ENCODE measurements at regions of chr4 and their contacts with region 1.

Region 1: GRCh38 chr4:38663801-38664705 is at the start of gene KLF3:
- DNase-seq: peak; percentile 86
- H3K4me3 Mint-ChIP-seq: peak within 1 kb of the TSS; percentile 79
- H3K27ac Mint-ChIP-seq: peak within 1 kb of the TSS; percentile 87
- H3K4me1 Mint-ChIP-seq: peaks cover 66% of the 10 kb centered on the region
- H3K27me3 Mint-ChIP-seq: no peaks in the 10 kb centered on the region
- total RNA-seq, gene KLF3: 15.2 to 15.8 TPM

Region 2: GRCh38 chr4:38509551-38509950 is 154.5 kb before region 1 on chr4:
- CTCF ChIA-PET with region 1: no interaction called
- intact Hi-C with region 1: loop called (anchors 2 kb)
- DNase-seq: peak; percentile 62
- H3K4me3 Mint-ChIP-seq: peak overlapping the region; percentile 53
- H3K27ac Mint-ChIP-seq: no peak overlapping the region
- H3K4me1 Mint-ChIP-seq: peaks cover 86% of the 10 kb centered on the region
- H3K27me3 Mint-ChIP-seq: no peaks in the 10 kb centered on the region

Region 3: DNA sequence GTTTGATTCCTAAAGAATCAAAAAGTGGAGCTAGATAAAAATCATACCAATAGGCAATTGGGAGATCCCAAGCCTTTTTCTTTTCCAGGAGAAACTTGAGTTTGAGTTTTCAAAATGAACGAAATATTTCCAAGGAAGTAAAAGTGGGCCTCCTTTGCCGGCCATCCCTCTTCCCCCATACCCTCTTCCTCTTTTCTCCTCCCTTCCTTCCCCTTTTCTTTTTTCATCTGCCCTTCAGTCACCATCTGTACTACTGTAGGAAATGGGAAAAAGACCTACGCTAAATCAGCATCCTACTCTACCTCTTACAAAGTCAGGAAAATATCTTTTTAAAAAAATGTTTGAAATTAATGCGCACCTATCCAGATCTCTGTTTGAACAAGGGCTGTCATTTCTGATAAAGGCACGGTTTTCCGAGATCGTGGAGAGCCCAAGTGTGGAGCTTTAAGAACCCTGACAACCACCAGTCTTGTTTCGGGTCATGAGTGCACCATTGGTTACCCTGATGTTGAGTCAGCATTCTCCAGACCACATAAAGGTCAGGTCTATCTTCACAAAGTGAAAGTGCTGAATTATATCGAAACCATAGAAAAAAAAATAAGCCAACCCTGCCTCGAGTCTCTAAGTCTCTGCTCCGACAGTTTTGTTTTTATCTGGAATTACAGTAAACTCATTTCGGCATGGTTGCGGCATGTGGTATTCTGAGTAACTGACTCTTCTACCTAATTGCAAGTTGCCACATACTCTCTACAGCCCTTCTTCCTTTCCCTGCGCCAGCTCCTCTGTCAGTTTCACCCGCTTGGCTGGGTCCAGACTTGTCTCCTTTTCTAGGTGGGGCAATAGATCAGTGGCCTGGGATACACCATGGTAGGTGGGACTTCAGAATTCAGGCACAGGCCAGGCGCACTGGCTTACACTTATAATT is 140.3 kb before region 1 on chr4:
- CTCF ChIA-PET with region 1: no interaction called
- intact Hi-C with region 1: loop called (anchors 1 kb)
- DNase-seq: peak; percentile 59
- H3K4me3 Mint-ChIP-seq: no peak overlapping the region
- H3K27ac Mint-ChIP-seq: peak overlapping the region; percentile 31
- H3K4me1 Mint-ChIP-seq: peaks cover 14% of the 10 kb centered on the region
- H3K27me3 Mint-ChIP-seq: no peaks in the 10 kb centered on the region

Region 4: GRCh38 chr4:38560768-38561558 is 103.1 kb before region 1 on chr4:
- CTCF ChIA-PET with region 1: no interaction called
- intact Hi-C with region 1: loop called (anchors 2 kb)
- DNase-seq: peak; percentile 60
- H3K4me3 Mint-ChIP-seq: no peak overlapping the region
- H3K27ac Mint-ChIP-seq: no peak overlapping the region
- H3K4me1 Mint-ChIP-seq: peaks cover 16% of the 10 kb centered on the region
- H3K27me3 Mint-ChIP-seq: peaks cover 2% of the 10 kb centered on the region

Region 5: DNA sequence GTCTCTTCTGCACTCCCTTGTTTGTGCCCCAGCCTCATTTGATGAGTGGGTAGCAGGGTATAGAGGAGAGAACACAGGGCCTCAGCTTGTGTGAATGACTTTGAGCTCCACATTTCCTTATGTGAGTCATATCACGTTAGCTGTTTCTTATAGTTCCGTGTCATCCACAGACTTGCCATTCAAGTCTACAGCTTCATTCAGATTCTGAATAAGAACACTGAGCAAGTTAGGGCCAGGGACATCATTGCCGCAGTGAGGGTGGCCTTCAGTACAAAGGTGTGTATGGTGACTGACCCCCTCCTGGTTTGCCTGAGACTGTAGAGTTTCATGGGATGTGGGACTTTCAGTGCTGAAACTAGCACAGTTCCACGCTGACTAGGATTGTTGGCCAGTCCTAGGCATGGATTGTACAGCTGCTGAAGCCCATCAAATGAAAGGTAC is 23.5 kb after region 1 on chr4:
- CTCF ChIA-PET with region 1: no interaction called
- intact Hi-C with region 1: loop called (anchors 1 kb)
- DNase-seq: peak; percentile 50
- H3K4me3 Mint-ChIP-seq: no peak overlapping the region
- H3K27ac Mint-ChIP-seq: peak overlapping the region; percentile 78
- H3K4me1 Mint-ChIP-seq: peaks cover 62% of the 10 kb centered on the region
- H3K27me3 Mint-ChIP-seq: no peaks in the 10 kb centered on the region

Region 6: DNA sequence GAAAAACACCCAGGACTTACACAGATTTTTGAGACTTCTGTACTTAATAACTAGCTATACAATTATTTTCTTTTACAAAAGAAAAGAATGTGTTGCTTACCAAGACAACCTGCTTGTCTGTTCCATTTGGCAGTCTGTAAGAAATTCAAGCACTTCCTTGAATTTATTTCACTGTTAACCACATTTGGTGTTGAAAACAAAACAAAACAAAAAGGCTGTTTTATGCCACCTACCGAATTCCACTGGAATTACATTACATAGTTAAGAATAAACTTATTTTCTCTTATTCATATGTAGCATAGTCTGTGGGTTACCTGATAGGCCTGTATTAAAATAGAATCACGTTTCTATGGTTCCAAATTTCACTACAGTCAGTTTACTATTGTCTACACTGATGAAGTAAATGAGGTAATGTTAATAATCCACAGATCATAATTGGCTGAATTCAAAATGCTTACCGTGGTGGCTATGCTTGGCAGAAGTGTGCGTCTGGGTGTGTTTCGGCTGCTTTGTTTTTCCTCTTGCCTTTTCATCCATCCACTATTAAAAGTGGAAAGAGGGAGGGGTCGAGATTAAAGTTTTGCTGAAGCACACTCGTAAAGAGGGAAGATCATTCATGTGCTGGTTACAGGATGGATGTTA is 140.7 kb after region 1 on chr4 and contains the start of gene TLR1:
- CTCF ChIA-PET with region 1: no interaction called
- intact Hi-C with region 1: no loop called
- DNase-seq: peak; percentile 30
- H3K4me3 Mint-ChIP-seq: peak within 1 kb of the TSS; percentile 69
- H3K27ac Mint-ChIP-seq: peak within 1 kb of the TSS; percentile 90
- H3K4me1 Mint-ChIP-seq: peaks cover 30% of the 10 kb centered on the region
- H3K27me3 Mint-ChIP-seq: no peaks in the 10 kb centered on the region
- total RNA-seq, gene TLR1: 4.0 to 4.2 TPM